AG04450 (cell line): ENCODE measurements at regions of chr11 and their contacts with region 1.

Region 1: DNA sequence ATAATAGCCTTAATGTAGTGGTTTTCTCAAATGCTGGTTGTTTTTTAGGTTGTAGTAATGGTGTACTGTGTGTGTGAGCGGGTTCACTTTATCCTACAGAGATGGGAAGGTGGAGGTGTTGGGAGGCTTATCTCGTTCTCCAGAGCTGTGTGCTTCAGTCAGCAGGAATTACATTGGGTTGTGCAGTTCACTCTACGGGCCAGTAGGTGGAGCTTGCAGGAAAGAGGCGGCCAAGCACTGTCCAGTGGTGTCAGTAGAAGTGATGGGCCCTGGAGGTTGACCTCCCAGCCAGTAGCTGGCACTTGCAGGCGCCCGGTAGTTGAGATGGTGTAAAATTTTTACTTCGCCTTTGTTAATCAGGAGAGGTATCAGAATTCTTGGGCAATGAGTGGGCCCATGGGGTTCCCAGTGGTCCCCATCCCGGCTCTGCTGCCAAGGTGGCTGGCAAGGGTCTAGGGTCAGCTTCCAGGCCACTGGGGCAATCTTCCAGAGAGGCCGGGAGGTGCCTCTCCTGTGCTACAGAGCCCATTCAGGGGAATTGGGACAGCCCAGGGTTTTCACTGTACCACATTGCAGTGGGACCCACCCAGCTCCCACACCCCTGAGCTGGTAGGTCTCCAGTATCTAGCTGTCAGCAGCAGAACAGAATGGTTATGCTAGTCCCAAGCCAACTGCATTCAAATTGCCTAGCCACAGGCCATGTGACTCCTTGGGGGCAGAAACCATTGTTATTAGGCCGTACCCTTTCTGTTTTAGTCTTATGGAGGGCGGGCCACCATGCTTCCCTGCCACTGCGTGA is 43.9 kb downstream of the BIRC2 start:
- DNase-seq: peak; percentile 21
- H3K4me3 ChIP-seq: no peak overlapping the region
- H3K27ac ChIP-seq: no peak overlapping the region
- H3K27me3 ChIP-seq: no peaks in the 10 kb centered on the region
- CTCF ChIP-seq: peak; percentile 91

Region 2: DNA sequence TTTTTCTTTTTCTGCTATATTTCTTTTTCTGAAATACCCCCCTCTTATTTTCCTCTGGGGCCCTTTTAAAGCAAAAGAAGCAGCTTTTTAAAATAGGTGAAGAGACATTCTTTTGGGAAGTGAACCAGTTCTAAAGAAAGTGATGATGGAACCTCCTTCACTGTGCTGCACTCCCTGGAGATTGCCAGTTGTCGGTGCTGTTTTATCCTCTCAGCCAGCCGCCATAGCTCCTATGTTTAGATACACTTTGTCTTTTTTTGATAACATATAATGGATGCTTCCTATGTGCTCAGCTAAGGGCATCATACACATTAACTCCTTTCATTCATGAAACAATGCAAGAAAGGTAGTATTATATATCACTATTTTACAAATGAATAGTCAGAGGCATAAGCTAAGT is 329.6 kb before region 1 on chr11:
- CTCF ChIA-PET with region 1: no interaction called
- POLR2A ChIA-PET with region 1: no interaction called
- DNase-seq: no peak
- H3K4me3 ChIP-seq: no peak overlapping the region
- H3K27ac ChIP-seq: no peak overlapping the region
- H3K27me3 ChIP-seq: no peaks in the 10 kb centered on the region
- CTCF ChIP-seq: peak; percentile 60

Region 3: GRCh38 chr11:102205805-102206204 is 185.1 kb before region 1 on chr11:
- CTCF ChIA-PET with region 1: no interaction called
- POLR2A ChIA-PET with region 1: no interaction called
- DNase-seq: no peak
- H3K4me3 ChIP-seq: no peak overlapping the region
- H3K27ac ChIP-seq: no peak overlapping the region
- H3K27me3 ChIP-seq: no peaks in the 10 kb centered on the region
- CTCF ChIP-seq: no peak

Region 4: DNA sequence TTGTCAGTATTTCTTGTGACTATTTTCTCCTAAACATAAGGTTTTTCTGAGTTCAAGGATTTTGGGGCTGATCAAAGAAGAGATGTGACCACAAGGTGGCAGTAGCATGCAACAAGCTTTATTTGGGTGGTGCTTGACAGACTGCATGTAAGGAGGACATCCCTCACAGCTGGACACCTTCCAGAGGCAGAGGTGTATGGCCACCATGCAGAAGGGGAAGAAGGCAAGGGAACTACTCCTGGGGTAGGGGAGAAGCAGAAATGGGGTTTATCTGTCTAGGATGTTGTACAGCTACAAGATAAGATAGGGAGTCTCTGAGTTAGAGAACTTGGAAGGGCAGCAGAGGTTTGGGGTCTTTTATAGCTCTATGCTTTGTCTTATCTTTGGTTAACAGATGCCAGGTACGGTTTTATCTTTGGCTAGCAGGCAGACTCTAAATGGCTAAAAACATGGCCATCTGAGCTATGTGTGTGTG is 49.0 kb before region 1 on chr11:
- CTCF ChIA-PET with region 1: interaction called, 13 read pairs
- POLR2A ChIA-PET with region 1: no interaction called
- DNase-seq: peak; percentile 68
- H3K4me3 ChIP-seq: no peak overlapping the region
- H3K27ac ChIP-seq: no peak overlapping the region
- H3K27me3 ChIP-seq: no peaks in the 10 kb centered on the region
- CTCF ChIP-seq: peak; percentile 81

Region 5: DNA sequence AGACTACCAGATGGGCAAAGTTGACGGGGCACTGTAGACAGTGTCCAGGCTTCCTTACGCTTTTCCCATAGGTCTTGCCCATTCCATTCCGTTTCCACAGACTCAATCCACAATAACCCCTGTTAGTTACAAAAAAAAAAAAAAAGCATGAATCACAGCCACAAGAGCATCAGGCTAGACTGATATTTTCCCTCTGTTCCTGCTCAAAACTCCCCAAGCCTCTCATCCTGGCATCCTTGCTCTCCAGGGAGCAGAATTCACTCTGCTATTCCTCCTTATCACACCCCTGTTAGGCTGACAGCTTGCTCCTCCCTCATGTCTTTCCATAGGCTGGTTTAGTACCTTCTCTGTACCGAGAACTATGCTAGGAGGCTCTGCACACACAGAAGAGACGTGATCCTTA is 19.5 kb after region 1 on chr11:
- CTCF ChIA-PET with region 1: interaction called, 21 read pairs
- POLR2A ChIA-PET with region 1: no interaction called
- DNase-seq: peak; percentile 15
- H3K4me3 ChIP-seq: no peak overlapping the region
- H3K27ac ChIP-seq: peak overlapping the region; percentile 24
- H3K27me3 ChIP-seq: no peaks in the 10 kb centered on the region
- CTCF ChIP-seq: no peak

Region 6: DNA sequence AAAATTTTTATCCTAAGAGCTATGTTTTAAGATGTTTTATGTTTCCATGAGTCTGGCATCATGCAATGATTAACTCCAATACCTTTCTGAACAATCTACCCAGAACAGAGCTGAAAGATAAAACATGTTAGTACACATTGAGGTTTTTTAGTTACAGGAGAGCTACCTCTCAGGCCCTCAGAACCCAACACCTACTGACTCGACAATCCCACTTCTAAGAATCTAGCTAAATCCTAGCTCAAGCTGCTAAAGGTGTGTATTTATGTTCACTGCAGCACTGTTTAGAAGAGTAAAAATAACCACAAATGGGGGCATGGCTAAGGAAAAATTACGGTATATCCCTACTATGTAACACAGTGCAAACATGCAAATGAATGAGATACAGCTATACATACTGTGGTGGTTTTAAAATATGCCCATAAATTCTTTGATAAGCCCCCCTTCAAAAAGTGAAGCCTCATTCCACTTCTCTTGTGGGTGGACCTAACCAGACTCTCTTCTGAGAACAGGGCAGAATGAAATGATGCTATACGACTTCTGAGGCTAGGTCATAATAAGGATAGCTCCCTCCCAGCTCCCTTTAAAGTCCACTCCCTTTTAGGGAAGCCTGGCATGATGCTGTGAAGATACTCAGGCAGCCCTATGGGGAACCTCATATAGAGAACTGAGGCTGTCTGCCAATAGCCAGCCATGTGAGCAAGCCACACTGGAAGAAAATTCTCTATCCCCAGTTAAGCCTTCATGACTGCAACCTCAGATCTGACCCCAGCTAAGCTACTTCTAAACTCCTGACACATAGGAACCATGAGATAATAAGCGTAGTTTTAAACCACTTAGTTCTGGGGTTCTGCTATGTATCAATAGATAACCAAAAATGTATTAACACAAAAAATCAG is 32.2 kb after region 1 on chr11:
- CTCF ChIA-PET with region 1: interaction called, 15 read pairs
- POLR2A ChIA-PET with region 1: no interaction called
- DNase-seq: no peak
- H3K4me3 ChIP-seq: no peak overlapping the region
- H3K27ac ChIP-seq: no peak overlapping the region
- H3K27me3 ChIP-seq: no peaks in the 10 kb centered on the region
- CTCF ChIP-seq: no peak

Region 7: DNA sequence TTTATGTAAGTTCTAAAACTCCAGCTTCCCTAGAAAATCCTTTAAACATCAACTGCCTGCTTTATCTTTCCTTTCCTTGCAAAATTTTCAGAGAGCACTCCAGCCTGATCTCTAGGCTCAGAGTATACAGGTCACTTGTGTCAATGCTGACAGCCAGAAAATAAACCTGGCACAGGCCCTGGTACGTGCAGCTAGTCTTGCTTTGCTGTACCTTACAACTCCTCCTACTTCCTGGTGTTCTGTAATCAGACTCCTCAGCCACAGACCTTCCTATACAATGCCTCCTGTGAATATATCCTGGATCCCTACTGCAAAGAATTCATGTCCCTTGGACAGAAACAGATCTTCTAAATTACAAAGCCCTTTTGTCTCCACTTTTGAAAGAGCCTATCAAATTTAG is 85.9 kb after region 1 on chr11:
- CTCF ChIA-PET with region 1: interaction called, 26 read pairs
- POLR2A ChIA-PET with region 1: no interaction called
- DNase-seq: no peak
- H3K4me3 ChIP-seq: no peak overlapping the region
- H3K27ac ChIP-seq: no peak overlapping the region
- H3K27me3 ChIP-seq: no peaks in the 10 kb centered on the region
- CTCF ChIP-seq: no peak

Region 8: DNA sequence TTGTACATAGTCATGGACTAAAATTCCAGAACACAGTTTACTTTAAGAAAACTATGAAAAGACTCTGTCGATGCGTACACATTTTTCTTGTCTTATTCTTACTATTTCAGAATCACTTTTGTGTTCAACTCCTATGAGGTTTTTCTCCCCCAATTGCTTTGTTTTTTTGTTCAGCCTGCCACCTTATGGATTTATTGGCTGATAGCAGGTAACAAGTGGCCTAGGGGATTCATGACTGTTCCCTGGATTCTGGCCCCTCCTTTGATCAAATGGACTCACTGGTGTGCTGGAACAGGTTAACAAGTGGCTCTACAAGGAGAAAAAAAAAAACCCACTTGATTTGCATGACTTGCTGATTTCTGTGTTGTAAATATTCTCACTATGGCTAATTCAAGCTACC is 223.6 kb after region 1 on chr11:
- CTCF ChIA-PET with region 1: interaction called, 11 read pairs
- POLR2A ChIA-PET with region 1: no interaction called
- DNase-seq: no peak
- H3K4me3 ChIP-seq: no peak overlapping the region
- H3K27ac ChIP-seq: no peak overlapping the region
- H3K27me3 ChIP-seq: no peaks in the 10 kb centered on the region
- CTCF ChIP-seq: peak; percentile 7; the same call in 1 of the 2 replicates

Region 9: DNA sequence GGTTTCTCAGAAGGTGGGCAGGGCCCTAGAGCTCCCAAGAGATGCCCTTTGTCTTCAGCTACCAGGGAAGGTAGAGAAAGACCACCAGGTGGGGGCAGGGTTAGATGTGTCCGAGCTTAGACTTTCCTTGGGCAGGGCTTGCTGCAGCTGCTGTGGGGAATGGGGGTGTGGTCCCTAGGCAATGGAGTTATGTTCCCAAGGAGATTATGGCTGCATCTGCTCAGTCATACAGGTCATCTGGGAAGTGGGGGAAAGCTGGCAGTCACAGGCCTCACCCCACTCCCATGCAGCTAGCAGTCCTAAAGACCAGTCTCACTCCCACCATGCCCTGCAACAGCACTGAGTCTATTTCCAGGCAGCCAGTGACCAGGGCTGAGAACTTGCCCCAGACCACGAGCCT is 285.2 kb after region 1 on chr11:
- CTCF ChIA-PET with region 1: no interaction called
- POLR2A ChIA-PET with region 1: no interaction called
- DNase-seq: no peak
- H3K4me3 ChIP-seq: no peak overlapping the region
- H3K27ac ChIP-seq: no peak overlapping the region
- H3K27me3 ChIP-seq: no peaks in the 10 kb centered on the region
- CTCF ChIP-seq: no peak